Psoas muscle (tissue), 8 donors: ENCODE measurements at regions of chr1 and their contacts with region 1.

Region 1: DNA sequence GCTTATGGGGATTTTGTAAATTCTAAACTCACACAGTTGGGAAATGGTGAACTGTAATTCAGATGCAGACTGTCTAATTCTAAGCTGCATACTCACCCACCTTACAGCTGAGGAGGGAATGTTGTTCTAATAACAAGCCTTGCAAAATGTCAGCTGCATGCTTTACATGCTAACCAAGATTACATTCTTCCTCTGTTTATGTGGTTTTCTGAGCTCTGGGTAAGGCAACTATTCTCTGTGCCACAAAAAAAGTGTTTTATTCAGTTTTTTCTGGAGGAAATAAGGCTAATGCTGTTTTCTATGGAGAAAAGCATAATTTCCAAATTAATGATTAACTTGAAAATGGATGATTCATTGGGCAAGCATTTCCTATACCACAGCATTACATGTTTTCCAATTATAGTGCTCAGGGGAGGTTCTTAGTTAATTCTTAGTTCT is 64.9 kb downstream of the RGS13 start:
- DNase-seq: no peak
- ATAC-seq: no peak
- H3K4me3 ChIP-seq: no peak overlapping the region
- H3K27ac ChIP-seq: no peak overlapping the region
- H3K4me1 ChIP-seq: peaks cover 7% of the 10 kb centered on the region
- H3K27me3 ChIP-seq: no peaks in the 10 kb centered on the region
- CTCF ChIP-seq: no peak

Region 2: DNA sequence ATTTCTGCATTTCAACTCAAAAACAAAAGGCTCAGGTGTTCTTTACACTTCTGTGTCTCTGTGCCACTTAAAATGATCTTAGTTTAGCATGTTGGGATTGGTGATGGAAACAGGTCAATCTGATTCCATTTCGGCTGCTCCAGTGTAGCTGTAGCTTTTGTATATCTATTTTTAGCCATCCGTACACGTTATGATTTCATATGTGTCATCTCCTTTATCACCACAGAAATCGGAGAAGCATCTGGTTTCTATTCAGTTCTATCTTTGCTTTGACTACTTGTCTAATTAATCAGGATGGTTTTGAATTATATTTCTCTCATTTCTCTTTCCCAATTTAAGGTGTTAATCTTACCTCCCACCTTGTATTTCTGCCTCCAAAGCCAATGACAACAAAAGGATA is 342.9 kb before region 1 on chr1:
- intact Hi-C with region 1: no loop called
- DNase-seq: no peak
- ATAC-seq: no peak
- H3K4me3 ChIP-seq: no peak overlapping the region
- H3K27ac ChIP-seq: no peak overlapping the region
- H3K4me1 ChIP-seq: no peaks in the 10 kb centered on the region
- H3K27me3 ChIP-seq: no peaks in the 10 kb centered on the region
- CTCF ChIP-seq: no peak

Region 3: DNA sequence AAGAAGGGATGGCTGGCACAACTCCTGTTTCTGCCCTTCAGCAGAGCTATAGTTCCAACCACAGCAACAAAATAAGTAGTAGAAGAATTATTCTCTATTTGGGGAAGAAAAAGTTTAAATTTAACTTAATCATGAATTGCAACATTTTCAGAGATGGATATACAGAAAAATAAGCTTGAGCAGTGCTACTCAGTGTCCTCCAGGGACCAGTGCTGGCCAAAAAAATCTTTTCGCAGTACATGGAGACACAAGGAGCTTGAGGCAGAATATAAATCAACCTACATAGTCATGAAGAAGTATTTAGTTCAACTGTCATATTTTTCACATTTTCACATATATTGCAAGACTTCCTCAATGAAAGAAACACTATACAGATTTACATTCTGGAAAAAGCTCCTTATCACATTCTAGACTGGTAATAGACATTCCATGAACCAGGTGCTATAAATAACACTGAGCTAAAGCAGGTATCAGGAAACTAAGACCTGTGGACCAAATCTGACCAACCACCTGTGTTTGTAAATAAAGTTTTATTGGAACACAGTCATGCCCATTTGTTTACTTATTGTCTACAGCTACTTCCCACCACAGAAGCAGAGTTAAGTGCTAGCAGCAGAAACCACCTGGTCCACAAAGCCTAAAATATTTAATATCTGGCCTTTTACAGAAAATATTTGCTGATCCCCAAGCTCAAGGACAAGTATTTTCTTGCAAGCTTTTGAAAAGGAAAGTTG is 282.1 kb before region 1 on chr1:
- intact Hi-C with region 1: loop called in 1 of 2 experiments (anchors 5 kb)
- DNase-seq: no peak
- ATAC-seq: no peak
- H3K4me3 ChIP-seq: no peak overlapping the region
- H3K27ac ChIP-seq: no peak overlapping the region
- H3K4me1 ChIP-seq: no peaks in the 10 kb centered on the region
- H3K27me3 ChIP-seq: no peaks in the 10 kb centered on the region
- CTCF ChIP-seq: no peak

Region 4: DNA sequence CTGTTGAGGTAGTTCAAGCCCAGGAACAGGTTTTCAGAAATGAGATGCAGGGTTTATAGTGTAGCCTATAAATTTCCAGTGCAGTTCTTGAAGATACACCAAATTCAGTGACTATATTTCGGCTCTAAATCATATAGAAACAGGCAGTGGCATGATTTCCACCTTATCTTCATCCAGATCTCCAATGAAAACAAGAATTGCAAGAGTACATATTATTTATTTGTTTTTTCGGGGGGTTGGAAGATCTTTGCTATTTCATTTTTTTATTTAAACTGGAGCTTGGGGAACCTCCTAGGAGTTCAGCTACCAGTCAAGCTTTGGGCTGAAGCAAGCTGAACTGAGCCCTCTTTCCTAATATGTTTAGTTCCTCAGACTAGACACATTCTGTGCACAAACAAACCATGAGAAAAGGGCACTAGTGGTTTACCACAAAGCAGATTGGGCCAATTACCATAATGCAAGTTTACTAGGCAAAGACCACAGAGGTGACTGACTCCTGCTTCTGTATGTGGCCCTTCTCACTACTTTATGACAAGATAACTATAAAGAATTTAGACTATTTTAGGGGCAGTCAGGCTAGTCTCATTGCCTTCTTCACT is 176.5 kb after region 1 on chr1:
- intact Hi-C with region 1: no loop called
- DNase-seq: no peak
- ATAC-seq: peak in 1 of 4 donors; percentile 10
- H3K4me3 ChIP-seq: no peak overlapping the region
- H3K27ac ChIP-seq: no peak overlapping the region
- H3K4me1 ChIP-seq: no peaks in the 10 kb centered on the region
- H3K27me3 ChIP-seq: no peaks in the 10 kb centered on the region
- CTCF ChIP-seq: no peak

Region 5: GRCh38 chr1:193406901-193407300 is 706.0 kb after region 1 on chr1:
- intact Hi-C with region 1: loop called in 1 of 2 experiments (anchors 5 kb)
- DNase-seq: no peak
- ATAC-seq: no peak
- H3K4me3 ChIP-seq: no peak overlapping the region
- H3K27ac ChIP-seq: no peak overlapping the region
- H3K4me1 ChIP-seq: no peaks in the 10 kb centered on the region
- H3K27me3 ChIP-seq: no peaks in the 10 kb centered on the region
- CTCF ChIP-seq: peak; percentile 46